ENCODE measurements at regions of chr3 and their contacts with region 1.

Region 1: DNA sequence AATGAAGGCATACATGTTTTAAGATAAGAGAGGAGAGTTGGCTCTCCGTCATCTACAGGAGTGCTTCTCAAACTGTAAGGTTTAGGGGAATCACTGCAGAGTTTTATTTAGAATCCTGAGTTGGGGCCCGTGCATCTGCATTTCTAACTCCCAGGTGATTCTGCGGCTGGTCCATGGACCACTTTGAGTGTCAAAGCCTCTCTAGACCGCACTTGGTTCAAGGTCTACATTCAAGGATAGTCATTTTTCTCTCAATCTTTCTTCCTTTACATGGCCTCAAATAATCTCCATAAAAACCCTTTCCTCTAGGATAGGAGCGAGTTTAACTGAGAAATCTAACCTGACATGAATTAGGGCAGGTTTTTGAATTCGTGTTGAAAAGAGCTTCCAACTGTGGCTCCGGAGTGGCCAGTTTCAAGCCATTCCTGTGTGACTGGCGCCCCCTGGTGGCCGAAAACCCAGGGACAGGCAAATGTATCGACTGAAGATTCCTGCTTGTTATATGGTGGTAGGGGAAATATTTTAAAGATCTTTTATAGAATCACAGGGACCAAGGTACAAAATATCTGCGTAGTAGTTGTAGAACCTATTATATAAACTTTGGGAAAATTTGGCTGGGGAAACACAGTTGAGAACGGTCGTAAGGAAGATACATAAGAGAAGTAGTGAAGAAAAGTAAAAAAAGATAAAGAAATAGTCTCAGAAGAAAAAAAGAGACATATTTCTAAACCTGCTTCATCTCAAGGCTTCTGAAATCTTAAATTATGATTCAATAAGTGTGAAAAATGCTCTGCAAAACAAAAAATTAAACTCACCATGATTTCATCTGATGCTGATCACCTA is 11.9 kb downstream of the GABRR3 start:
- DNase-seq: peak; percentile 75 to 88
- H3K4me3 ChIP-seq: no peak overlapping the region
- H3K27ac ChIP-seq: no peak overlapping the region
- H3K4me1 ChIP-seq: peaks cover 6% of the 10 kb centered on the region; the same call in 1 of the 2 replicates
- H3K27me3 ChIP-seq: no peaks in the 10 kb centered on the region
- CTCF ChIP-seq: peak; percentile 100

Region 2: DNA sequence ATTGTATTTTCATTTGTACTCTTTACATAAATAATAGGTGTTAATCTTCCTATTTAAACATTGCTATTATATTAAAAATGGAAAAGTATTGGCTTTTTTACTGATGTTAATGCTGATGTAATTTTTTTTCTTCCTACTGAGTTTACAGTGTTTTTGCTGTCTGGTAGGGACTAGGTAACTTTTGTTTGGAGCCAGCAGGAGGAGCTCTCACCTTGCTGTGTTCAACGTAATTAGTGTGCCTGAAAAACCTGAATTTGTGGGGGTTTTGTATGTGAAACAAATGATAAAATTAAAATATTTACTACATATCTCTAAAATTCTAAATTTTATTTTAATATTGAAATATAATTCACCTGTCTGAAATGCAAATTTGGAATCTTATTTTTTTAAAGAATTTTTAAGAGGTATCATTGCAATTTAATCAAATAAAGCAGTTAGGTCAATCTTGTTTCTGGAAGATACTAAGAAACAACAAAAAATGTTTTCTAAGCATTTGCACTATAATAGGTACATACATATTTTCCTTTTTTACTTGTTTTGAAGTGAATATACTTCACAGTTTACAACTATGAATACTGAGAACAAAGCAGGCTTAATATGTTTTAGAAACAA is 1160.0 kb before region 1 on chr3:
- CTCF ChIA-PET with region 1: interaction called, 4 read pairs
- POLR2A ChIA-PET with region 1: no interaction called
- intact Hi-C with region 1: loop called (anchors 1 kb)
- DNase-seq: peak in 1 of 2 experiments; percentile 34
- H3K4me3 ChIP-seq: no peak overlapping the region
- H3K27ac ChIP-seq: no peak overlapping the region
- H3K4me1 ChIP-seq: no peaks in the 10 kb centered on the region
- H3K27me3 ChIP-seq: no peaks in the 10 kb centered on the region
- CTCF ChIP-seq: peak; percentile 92

Region 3: GRCh38 chr3:97719156-97719821 is 303.9 kb before region 1 on chr3:
- CTCF ChIA-PET with region 1: interaction called, 6 read pairs
- POLR2A ChIA-PET with region 1: no interaction called
- intact Hi-C with region 1: loop called (anchors 2 kb)
- DNase-seq: peak; percentile 71 to 79
- H3K4me3 ChIP-seq: peak overlapping the region; percentile 25; the same call in 1 of the 2 replicates
- H3K27ac ChIP-seq: no peak overlapping the region
- H3K4me1 ChIP-seq: no peaks in the 10 kb centered on the region
- H3K27me3 ChIP-seq: no peaks in the 10 kb centered on the region
- CTCF ChIP-seq: peak; percentile 99

Region 4: DNA sequence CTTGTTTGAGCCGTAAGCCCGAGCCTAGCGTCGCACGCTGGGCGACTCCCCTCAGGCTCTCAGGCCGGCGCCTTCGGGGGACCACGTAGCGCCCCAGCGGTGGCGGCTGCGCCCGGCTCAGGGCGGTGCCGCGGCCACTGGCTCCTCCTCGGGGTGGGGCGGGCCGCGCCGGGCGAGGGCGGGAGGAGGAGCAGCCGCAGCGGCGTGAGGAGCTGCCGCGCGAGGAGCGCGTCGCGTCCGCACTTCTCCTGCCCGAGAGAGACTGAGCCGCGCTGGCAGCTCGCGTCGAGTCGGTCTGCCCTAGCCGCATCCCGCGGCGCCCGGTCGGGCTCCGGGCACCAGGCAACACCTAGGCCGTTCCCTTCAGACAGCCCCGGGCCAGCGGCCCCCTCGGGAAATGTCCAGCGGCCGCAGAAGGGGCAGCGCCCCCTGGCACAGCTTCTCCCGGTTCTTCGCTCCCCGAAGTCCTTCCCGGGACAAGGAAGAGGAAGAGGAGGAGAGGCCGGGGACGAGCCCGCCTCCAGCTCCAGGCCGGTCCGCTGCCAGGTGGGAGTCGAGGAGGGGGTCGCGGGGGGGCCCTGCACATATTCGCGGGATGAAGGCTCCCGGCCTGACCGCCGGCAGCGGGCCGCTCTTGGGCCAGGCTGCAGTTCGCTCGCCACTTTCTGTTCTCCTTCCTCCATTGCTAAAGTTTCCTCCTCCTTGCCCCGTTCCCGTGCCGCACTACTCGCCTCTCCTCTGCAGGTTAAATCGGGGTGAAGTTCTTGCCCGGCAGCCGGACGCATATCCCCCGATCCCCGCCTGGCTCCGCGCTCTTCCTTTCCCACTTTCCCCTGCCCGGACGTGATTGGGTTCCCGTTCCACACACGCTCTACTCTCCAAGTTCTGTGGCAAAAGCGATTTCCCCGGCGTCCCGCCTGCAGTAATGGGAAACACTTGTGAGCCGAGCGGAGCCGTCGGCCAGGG is 201.1 kb before region 1 on chr3 and contains the start of gene CRYBG3:
- CTCF ChIA-PET with region 1: interaction called, 10 read pairs
- POLR2A ChIA-PET with region 1: no interaction called
- intact Hi-C with region 1: no loop called
- DNase-seq: peak; percentile 77 to 92
- H3K4me3 ChIP-seq: peak within 1 kb of the TSS; percentile 71
- H3K27ac ChIP-seq: peak within 1 kb of the TSS; percentile 36
- H3K4me1 ChIP-seq: peaks cover 19% of the 10 kb centered on the region
- H3K27me3 ChIP-seq: no peaks in the 10 kb centered on the region
- CTCF ChIP-seq: peak; percentile 60
- total RNA-seq, gene CRYBG3: 15.5 and 17.2 TPM in 2 replicates

Region 5: DNA sequence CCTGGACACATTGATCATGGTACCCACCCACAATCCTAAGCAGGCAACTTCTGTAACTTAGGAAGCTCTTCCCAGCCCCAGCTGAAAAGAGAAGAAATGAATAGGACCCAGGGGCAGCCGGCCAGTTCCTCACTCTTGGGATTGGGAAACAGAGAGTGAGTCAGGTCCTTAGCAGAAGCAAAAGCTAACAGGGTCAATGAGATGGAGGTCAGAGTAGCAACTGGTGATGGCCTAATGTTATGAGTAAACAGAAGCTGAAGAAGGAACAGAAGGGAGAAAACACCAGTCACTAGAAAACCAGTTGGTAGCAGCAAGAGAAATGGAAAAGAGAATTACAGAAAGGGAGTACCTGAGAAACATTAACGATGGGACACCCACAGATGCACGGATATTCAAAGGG is 70.9 kb before region 1 on chr3:
- CTCF ChIA-PET with region 1: no interaction called
- POLR2A ChIA-PET with region 1: interaction called, 4 read pairs
- intact Hi-C with region 1: loop called (anchors 5 kb)
- DNase-seq: peak; percentile 26 to 93
- H3K4me3 ChIP-seq: peak overlapping the region; percentile 36
- H3K27ac ChIP-seq: peak overlapping the region; percentile 91
- H3K4me1 ChIP-seq: peaks cover 43% of the 10 kb centered on the region
- H3K27me3 ChIP-seq: no peaks in the 10 kb centered on the region
- CTCF ChIP-seq: no peak

Region 6: DNA sequence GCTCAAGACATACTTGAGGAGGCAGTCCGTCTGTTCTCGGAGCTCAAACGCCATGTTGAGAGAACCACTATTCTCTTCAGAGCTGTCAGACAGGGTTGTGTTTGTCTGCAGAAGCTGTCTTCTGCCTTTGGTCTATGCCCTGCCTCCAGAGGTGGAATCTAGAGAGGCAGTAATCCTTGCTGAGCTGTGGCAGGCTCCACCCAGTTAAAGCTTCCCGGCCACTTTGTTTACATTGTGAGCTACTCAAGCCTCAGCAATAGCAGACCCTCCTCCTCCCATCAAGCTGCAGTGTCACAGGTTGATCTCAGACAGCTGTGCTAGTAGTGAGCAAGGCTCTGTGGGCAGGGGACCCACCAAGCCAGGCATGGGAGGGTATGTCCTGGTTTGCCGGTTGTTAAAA is 72.7 kb after region 1 on chr3:
- CTCF ChIA-PET with region 1: no interaction called
- POLR2A ChIA-PET with region 1: no interaction called
- intact Hi-C with region 1: no loop called
- DNase-seq: peak in 1 of 2 experiments; percentile 33
- H3K4me3 ChIP-seq: no peak overlapping the region
- H3K27ac ChIP-seq: no peak overlapping the region
- H3K4me1 ChIP-seq: peaks cover 5% of the 10 kb centered on the region; the same call in 1 of the 2 replicates
- H3K27me3 ChIP-seq: no peaks in the 10 kb centered on the region
- CTCF ChIP-seq: no peak

Region 7: GRCh38 chr3:98109807-98110549 is 86.8 kb after region 1 on chr3:
- CTCF ChIA-PET with region 1: no interaction called
- POLR2A ChIA-PET with region 1: no interaction called
- intact Hi-C with region 1: no loop called
- DNase-seq: no peak
- H3K4me3 ChIP-seq: no peak overlapping the region
- H3K27ac ChIP-seq: no peak overlapping the region
- H3K4me1 ChIP-seq: no peaks in the 10 kb centered on the region
- H3K27me3 ChIP-seq: no peaks in the 10 kb centered on the region
- CTCF ChIP-seq: no peak